Heart left ventricle (tissue), 16 donors: ENCODE measurements at regions of chr9 and their contacts with region 1.

Region 1: GRCh38 chr9:13863112-13863511 is 450.8 kb downstream of the NFIB start:
- DNase-seq: peak; percentile 63 to 80 (median 77)
- ATAC-seq: peak; percentile 85 to 97 (median 95)
- H3K4me3 ChIP-seq: no peak overlapping the region
- H3K27ac ChIP-seq: peak overlapping the region; percentile 12 to 56 (median 38)
- H3K4me1 ChIP-seq: peaks cover 0 to 39% (median 21%) of the 10 kb centered on the region in 12 donors
- H3K27me3 ChIP-seq: no peaks in the 10 kb centered on the region
- CTCF ChIP-seq: no peak
- POLR2A ChIP-seq: no peak

Region 2: DNA sequence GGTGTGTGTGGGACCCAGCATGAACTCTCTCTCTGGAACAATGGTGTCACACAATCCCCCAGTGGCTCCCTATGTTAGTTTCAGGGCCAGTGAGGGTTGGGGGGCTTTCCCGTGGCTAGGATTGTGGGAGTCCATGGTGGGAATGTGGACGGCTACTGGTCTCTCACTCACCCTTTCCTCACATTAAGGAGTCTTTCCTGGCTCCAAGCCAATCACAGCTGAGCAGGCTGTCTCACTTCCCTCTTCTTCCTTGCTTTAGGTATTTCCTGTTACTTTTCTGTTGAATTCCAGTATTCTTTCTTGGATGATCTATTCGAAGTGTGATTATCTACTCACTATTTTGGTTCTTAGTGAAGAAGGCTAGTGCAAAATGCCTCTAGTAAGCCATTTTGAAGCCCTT is 259.2 kb before region 1 on chr9:
- intact Hi-C with region 1: no loop called
- DNase-seq: no peak
- ATAC-seq: no peak
- H3K4me3 ChIP-seq: no peak overlapping the region
- H3K27ac ChIP-seq: no peak overlapping the region
- H3K4me1 ChIP-seq: peaks cover 0 to 47% (median 34%) of the 10 kb centered on the region in 12 donors
- H3K27me3 ChIP-seq: no peaks in the 10 kb centered on the region
- CTCF ChIP-seq: no peak
- POLR2A ChIP-seq: no peak

Region 3: GRCh38 chr9:13719981-13720676 is 143.0 kb before region 1 on chr9:
- intact Hi-C with region 1: loop called in 2 of 10 experiments (anchors 5 to 10 kb)
- DNase-seq: no peak
- ATAC-seq: peak in 1 of 4 donors; percentile 41
- H3K4me3 ChIP-seq: no peak overlapping the region
- H3K27ac ChIP-seq: peak overlapping the region in 1 of 12 donors; percentile 10
- H3K4me1 ChIP-seq: peaks cover 0 to 36% (median 14%) of the 10 kb centered on the region in 12 donors
- H3K27me3 ChIP-seq: no peaks in the 10 kb centered on the region
- CTCF ChIP-seq: no peak
- POLR2A ChIP-seq: no peak

Region 4: GRCh38 chr9:13878241-13878711 is 15.2 kb after region 1 on chr9:
- intact Hi-C with region 1: loop called in 1 of 10 experiments (anchors 2 kb)
- DNase-seq: no peak
- ATAC-seq: no peak
- H3K4me3 ChIP-seq: no peak overlapping the region
- H3K27ac ChIP-seq: no peak overlapping the region
- H3K4me1 ChIP-seq: peaks cover 0 to 8% (median 0%) of the 10 kb centered on the region in 12 donors
- H3K27me3 ChIP-seq: no peaks in the 10 kb centered on the region
- CTCF ChIP-seq: no peak
- POLR2A ChIP-seq: no peak

Region 5: GRCh38 chr9:13898957-13899356 is 35.8 kb after region 1 on chr9:
- intact Hi-C with region 1: loop called in 1 of 10 experiments (anchors 5 kb)
- DNase-seq: peak in 4 of 5 donors; percentile 30 to 44 (median 36)
- ATAC-seq: no peak
- H3K4me3 ChIP-seq: no peak overlapping the region
- H3K27ac ChIP-seq: peak overlapping the region in 11 of 12 donors; percentile 42 to 84 (median 66)
- H3K4me1 ChIP-seq: peaks cover 6 to 66% (median 24%) of the 10 kb centered on the region in 12 donors
- H3K27me3 ChIP-seq: no peaks in the 10 kb centered on the region
- CTCF ChIP-seq: no peak
- POLR2A ChIP-seq: no peak

Region 6: GRCh38 chr9:13929013-13929412 is 65.9 kb after region 1 on chr9:
- intact Hi-C with region 1: loop called in 1 of 10 experiments (anchors 10 kb)
- DNase-seq: no peak
- ATAC-seq: no peak
- H3K4me3 ChIP-seq: no peak overlapping the region
- H3K27ac ChIP-seq: no peak overlapping the region
- H3K4me1 ChIP-seq: peaks cover 0 to 15% (median 4%) of the 10 kb centered on the region in 12 donors
- H3K27me3 ChIP-seq: no peaks in the 10 kb centered on the region
- CTCF ChIP-seq: no peak
- POLR2A ChIP-seq: no peak

Region 7: DNA sequence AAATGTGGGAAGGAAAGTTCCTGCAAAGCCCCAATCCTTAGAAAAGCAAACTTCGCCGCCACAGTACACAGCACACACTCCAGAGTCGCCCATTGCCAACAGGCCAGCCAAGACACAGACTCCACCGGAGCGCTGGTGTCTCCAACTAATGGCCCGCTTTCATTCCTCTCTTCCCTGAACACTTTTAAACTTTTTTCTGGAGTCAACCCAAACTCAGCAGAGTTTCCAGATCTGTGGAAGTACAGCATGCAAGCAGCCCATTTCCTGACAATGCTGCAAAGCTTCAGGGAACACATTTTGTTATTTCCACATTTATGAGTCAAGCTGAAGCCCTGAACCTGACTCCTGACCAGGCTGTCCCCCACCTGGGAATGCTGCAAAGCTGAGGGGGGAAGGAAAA is 98.9 kb after region 1 on chr9:
- intact Hi-C with region 1: loop called in 1 of 10 experiments (anchors 10 kb)
- DNase-seq: no peak
- ATAC-seq: peak in 3 of 4 donors; percentile 42 to 49 (median 44)
- H3K4me3 ChIP-seq: no peak overlapping the region
- H3K27ac ChIP-seq: peak overlapping the region in 1 of 12 donors; percentile 20
- H3K4me1 ChIP-seq: peaks cover 0 to 18% (median 5%) of the 10 kb centered on the region in 12 donors
- H3K27me3 ChIP-seq: no peaks in the 10 kb centered on the region
- CTCF ChIP-seq: no peak
- POLR2A ChIP-seq: no peak